Endothelial cell of umbilical vein (primary cell): ENCODE measurements at regions of chrX and their contacts with region 1.

Region 1: GRCh38 chrX:101799387-101799786 is 132.4 kb downstream of the ZMAT1 start:
- DNase-seq: peak; percentile 88
- H3K4me3 ChIP-seq: peak overlapping the region in 1 of 3 experiments; percentile 26
- H3K27ac ChIP-seq: no peak overlapping the region
- H3K4me1 ChIP-seq: peaks cover 3% of the 10 kb centered on the region
- H3K27me3 ChIP-seq: no peaks in the 10 kb centered on the region
- CTCF ChIP-seq: peak; percentile 40 to 52
- POLR2A ChIP-seq: no peak

Region 2: GRCh38 chrX:101415180-101416145 is 383.9 kb before region 1 on chrX:
- CTCF ChIA-PET with region 1: interaction called, 3 read pairs
- POLR2A ChIA-PET with region 1: no interaction called
- dilution Hi-C with region 1: no loop called
- intact Hi-C with region 1: loop called (anchors 1 kb)
- DNase-seq: peak; percentile 78
- H3K4me3 ChIP-seq: no peak overlapping the region
- H3K27ac ChIP-seq: no peak overlapping the region
- H3K4me1 ChIP-seq: peaks cover 15% of the 10 kb centered on the region
- H3K27me3 ChIP-seq: no peaks in the 10 kb centered on the region
- CTCF ChIP-seq: peak; percentile 33 to 45
- POLR2A ChIP-seq: no peak

Region 3: GRCh38 chrX:101595739-101596419 is 203.5 kb before region 1 on chrX:
- CTCF ChIA-PET with region 1: interaction called, 8 read pairs
- POLR2A ChIA-PET with region 1: no interaction called
- dilution Hi-C with region 1: no loop called
- intact Hi-C with region 1: loop called (anchors 5 kb)
- DNase-seq: peak; percentile 75
- H3K4me3 ChIP-seq: no peak overlapping the region
- H3K27ac ChIP-seq: no peak overlapping the region
- H3K4me1 ChIP-seq: no peaks in the 10 kb centered on the region
- H3K27me3 ChIP-seq: peaks cover 4 to 5% of the 10 kb centered on the region in 2 experiments
- CTCF ChIP-seq: peak; percentile 45 to 53
- POLR2A ChIP-seq: no peak

Region 4: GRCh38 chrX:101764538-101764937 is 34.8 kb before region 1 on chrX:
- CTCF ChIA-PET with region 1: interaction called, 5 read pairs
- POLR2A ChIA-PET with region 1: no interaction called
- dilution Hi-C with region 1: no loop called
- intact Hi-C with region 1: loop called (anchors 5 kb)
- DNase-seq: no peak
- H3K4me3 ChIP-seq: no peak overlapping the region
- H3K27ac ChIP-seq: no peak overlapping the region
- H3K4me1 ChIP-seq: no peaks in the 10 kb centered on the region
- H3K27me3 ChIP-seq: no peaks in the 10 kb centered on the region
- CTCF ChIP-seq: no peak
- POLR2A ChIP-seq: no peak

Region 5: DNA sequence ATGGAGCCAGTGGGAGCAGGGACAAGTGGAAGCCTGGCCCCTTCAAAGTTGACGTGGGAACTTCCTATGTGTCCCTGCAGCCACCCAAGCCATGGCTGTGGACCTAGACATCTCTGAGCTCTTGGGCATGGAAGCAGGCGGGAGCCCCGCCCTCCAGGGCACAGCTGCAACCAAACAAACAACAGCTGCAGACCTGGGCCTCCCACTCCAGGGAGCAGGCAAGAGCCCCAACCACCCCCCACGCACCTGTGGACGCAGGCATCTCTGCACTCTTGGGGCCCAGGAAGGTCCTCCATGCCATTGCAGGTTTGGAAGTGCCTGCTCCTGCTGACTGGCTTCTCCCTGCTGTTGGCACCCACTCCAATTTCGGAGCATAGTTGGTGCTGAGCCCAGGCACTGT is 13.8 kb after region 1 on chrX:
- CTCF ChIA-PET with region 1: no interaction called
- POLR2A ChIA-PET with region 1: no interaction called
- dilution Hi-C with region 1: no loop called
- intact Hi-C with region 1: no loop called
- DNase-seq: no peak
- H3K4me3 ChIP-seq: no peak overlapping the region
- H3K27ac ChIP-seq: no peak overlapping the region
- H3K4me1 ChIP-seq: no peaks in the 10 kb centered on the region
- H3K27me3 ChIP-seq: no peaks in the 10 kb centered on the region
- CTCF ChIP-seq: no peak
- POLR2A ChIP-seq: no peak

Region 6: GRCh38 chrX:102085706-102086105 is 286.3 kb after region 1 on chrX:
- CTCF ChIA-PET with region 1: no interaction called
- POLR2A ChIA-PET with region 1: no interaction called
- dilution Hi-C with region 1: no loop called
- intact Hi-C with region 1: loop called (anchors 5 kb)
- DNase-seq: peak; percentile 1
- H3K4me3 ChIP-seq: no peak overlapping the region
- H3K27ac ChIP-seq: no peak overlapping the region
- H3K4me1 ChIP-seq: no peaks in the 10 kb centered on the region
- H3K27me3 ChIP-seq: no peaks in the 10 kb centered on the region
- CTCF ChIP-seq: no peak
- POLR2A ChIP-seq: no peak

Region 7: GRCh38 chrX:102115748-102116147 is 316.4 kb after region 1 on chrX:
- CTCF ChIA-PET with region 1: no interaction called
- POLR2A ChIA-PET with region 1: no interaction called
- dilution Hi-C with region 1: no loop called
- intact Hi-C with region 1: no loop called
- DNase-seq: no peak
- H3K4me3 ChIP-seq: no peak overlapping the region
- H3K27ac ChIP-seq: no peak overlapping the region
- H3K4me1 ChIP-seq: no peaks in the 10 kb centered on the region
- H3K27me3 ChIP-seq: no peaks in the 10 kb centered on the region
- CTCF ChIP-seq: no peak
- POLR2A ChIP-seq: no peak